GM10248 (cell line): ENCODE measurements at regions of chr2 and their contacts with region 1.

Region 1: DNA sequence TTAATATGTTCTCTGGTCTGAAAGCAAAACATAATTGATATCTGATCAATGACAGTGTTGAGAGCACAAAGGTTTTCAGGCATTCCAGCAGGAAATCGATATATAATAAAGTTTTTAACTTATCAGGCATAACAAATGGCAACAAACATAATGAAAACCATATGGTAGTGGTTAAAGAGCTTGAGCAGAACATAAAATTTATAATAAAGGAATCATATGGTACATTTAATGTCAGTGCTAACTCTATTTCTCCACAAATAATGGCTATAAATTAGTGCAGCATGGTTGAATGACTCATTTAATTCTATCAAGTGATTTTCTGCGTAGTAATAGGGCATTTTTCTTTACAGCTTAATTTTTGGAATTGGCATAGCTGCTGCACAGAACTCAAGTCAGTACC is 306.2 kb downstream of the FSIP2 start:
- DNase-seq: no peak
- CTCF ChIP-seq: no peak

Region 2: GRCh38 chr2:185813682-185814081 is 231.1 kb before region 1 on chr2:
- CTCF ChIA-PET with region 1: no interaction called
- POLR2A ChIA-PET with region 1: no interaction called
- DNase-seq: no peak
- CTCF ChIP-seq: no peak

Region 3: DNA sequence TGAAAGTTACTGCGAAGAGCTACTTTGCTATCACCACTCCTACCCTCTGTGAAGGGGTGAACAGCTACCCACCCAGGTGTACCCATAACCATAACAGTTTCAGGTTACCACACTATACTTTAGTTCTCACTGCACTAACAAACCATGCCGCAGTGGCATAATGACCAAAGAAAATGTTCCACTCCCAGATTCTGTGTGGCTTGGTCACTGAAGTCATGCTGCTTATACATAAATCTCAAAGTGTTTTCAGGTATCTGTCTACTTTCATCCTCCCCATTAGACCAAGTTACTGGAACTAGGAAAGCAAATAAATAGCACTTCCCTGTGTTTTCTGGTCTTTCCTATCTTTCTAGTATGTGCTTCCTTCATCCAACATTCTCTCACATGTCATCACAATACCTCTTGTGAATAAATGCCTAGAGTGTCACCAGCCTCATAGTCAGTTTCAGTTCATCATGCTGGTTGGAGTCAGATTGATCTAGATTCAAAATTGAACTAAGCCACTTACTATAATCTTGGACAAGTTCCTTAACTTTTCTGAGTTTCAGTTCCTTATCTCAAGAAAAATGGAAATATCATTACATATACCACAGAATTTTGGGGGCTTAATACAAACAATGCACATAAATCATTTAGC is 12.5 kb before region 1 on chr2:
- CTCF ChIA-PET with region 1: interaction called, 10 read pairs
- POLR2A ChIA-PET with region 1: no interaction called
- DNase-seq: no peak
- CTCF ChIP-seq: no peak